OCI-LY7 (cell line): ENCODE measurements at regions of chr2 and their contacts with region 1.

Region 1: DNA sequence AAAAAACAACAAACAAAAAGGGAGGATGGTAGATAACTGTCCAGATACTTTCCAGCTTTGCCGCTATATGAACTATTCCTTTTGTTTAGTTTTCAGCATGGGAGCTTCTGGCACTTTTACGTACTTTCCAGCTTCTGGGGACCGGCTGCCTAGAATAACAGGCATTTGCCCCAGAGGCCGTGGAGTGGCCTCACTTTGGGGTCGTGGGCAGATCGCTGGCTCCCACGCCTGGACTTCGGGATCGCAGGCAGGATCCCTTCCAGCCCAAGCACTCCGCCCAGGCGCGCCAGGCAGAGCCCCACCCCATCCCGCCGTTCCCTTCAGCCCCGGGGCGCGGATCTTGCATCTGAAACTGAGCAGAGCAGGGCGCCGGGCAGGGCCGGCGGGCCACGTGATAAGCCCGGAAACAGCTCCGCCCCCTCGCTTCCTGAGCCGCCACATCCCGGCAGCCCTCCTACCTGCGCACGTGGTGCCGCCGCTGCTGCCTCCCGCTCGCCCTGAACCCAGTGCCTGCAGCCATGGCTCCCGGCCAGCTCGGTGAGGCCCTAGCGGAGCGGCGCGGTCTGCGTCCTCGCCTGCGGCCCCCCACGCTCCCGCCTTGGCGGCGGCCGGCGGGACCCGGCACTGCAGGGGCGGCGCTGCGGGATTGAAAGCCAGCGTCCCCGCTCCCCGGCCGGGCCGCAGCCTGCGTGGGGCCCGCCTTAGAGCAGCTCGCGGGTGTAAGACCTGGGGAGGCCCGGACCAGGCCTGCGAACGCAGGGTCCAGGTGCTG is at the start of gene ATIC:
- DNase-seq: peak; percentile 94
- H3K4me3 ChIP-seq: peak within 1 kb of the TSS; percentile 88
- H3K27ac ChIP-seq: peak within 1 kb of the TSS; percentile 58
- H3K4me1 ChIP-seq: peaks cover 22% of the 10 kb centered on the region
- CTCF ChIP-seq: no peak
- total RNA-seq, gene ATIC: 60.8 and 66.6 TPM in 2 replicates

Region 2: DNA sequence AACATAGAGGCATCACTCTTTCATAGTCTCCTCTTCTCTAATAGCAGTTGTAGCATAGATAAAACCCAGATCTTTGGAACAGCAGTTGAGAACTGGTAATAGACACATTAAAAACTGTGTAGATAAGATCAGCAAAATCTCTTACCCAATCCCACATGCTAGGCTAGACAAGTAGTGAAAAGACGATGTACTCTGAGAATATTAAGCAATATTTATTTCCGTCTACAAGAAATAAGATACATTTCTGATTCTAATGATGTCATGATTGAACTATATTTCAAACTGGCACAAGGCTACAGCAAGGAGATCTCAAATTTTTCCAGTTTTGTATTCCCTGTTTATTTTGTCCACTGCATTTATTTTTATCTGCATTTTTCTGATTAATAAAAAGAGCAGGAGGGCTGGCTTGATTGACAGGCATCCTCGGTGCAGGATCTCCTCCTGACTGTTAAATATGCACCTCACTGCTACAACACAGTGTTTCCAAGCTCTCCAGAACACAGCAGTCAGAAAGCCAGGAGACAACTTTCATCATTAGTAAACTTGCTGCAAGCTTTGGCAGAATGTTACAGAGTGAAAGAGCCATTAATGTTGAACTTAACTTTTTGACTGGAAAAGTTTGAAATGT is 73.2 kb before region 1 on chr2:
- CTCF ChIA-PET with region 1: no interaction called
- POLR2A ChIA-PET with region 1: no interaction called
- intact Hi-C with region 1: no loop called
- DNase-seq: no peak
- H3K4me3 ChIP-seq: no peak overlapping the region
- H3K27ac ChIP-seq: no peak overlapping the region
- H3K4me1 ChIP-seq: no peaks in the 10 kb centered on the region
- CTCF ChIP-seq: no peak

Region 3: GRCh38 chr2:215828517-215829184 is 516.8 kb after region 1 on chr2:
- CTCF ChIA-PET with region 1: no interaction called
- POLR2A ChIA-PET with region 1: no interaction called
- intact Hi-C with region 1: loop called (anchors 10 kb)
- DNase-seq: peak; percentile 64
- H3K4me3 ChIP-seq: no peak overlapping the region
- H3K27ac ChIP-seq: no peak overlapping the region
- H3K4me1 ChIP-seq: no peaks in the 10 kb centered on the region
- CTCF ChIP-seq: peak; percentile 84

Region 4: GRCh38 chr2:216013080-216013909 is 701.5 kb after region 1 on chr2 and contains the start of gene MREG:
- CTCF ChIA-PET with region 1: no interaction called
- POLR2A ChIA-PET with region 1: no interaction called
- intact Hi-C with region 1: loop called (anchors 5 kb)
- DNase-seq: peak; percentile 88
- H3K4me3 ChIP-seq: peak within 1 kb of the TSS; percentile 81
- H3K27ac ChIP-seq: peak within 1 kb of the TSS; percentile 23
- H3K4me1 ChIP-seq: peaks cover 50% of the 10 kb centered on the region
- CTCF ChIP-seq: peak; percentile 75
- total RNA-seq, gene MREG: 9.3 and 10.8 TPM in 2 replicates